ENCODE measurements at regions of chr1 and their contacts with region 1.

Region 1: GRCh38 chr1:201149400-201149799 is 4.9 kb downstream of the TMEM9 start:
- DNase-seq: peak; percentile 69
- H3K4me3 ChIP-seq: no peak overlapping the region
- H3K27ac ChIP-seq: no peak overlapping the region
- H3K4me1 ChIP-seq: peaks cover 10 to 11% of the 10 kb centered on the region in 2 experiments; a peak in 3 of 4 replicates
- H3K27me3 ChIP-seq: no peaks in the 10 kb centered on the region
- CTCF ChIP-seq: peak; percentile 60
- EP300 ChIP-seq: no peak
- RAD21 ChIP-seq: peak; percentile 56

Region 2: GRCh38 chr1:201137579-201138310 is 11.7 kb before region 1 on chr1:
- CTCF ChIA-PET with region 1: interaction called, 13 read pairs
- POLR2A ChIA-PET with region 1: interaction called, 4 read pairs
- DNase-seq: no peak
- H3K4me3 ChIP-seq: no peak overlapping the region; a peak in 1 of 4 replicates
- H3K27ac ChIP-seq: peak overlapping the region in 1 of 2 experiments; percentile 76; a peak in 2 of 4 replicates
- H3K4me1 ChIP-seq: peaks cover 19 to 21% of the 10 kb centered on the region in 2 experiments; a peak in 2 of 4 replicates
- H3K27me3 ChIP-seq: no peaks in the 10 kb centered on the region
- CTCF ChIP-seq: no peak
- EP300 ChIP-seq: no peak
- RAD21 ChIP-seq: no peak

Region 3: GRCh38 chr1:201170533-201171062 is 21.2 kb after region 1 on chr1:
- CTCF ChIA-PET with region 1: interaction called, 15 read pairs
- POLR2A ChIA-PET with region 1: interaction called, 3 read pairs
- DNase-seq: peak; percentile 97
- H3K4me3 ChIP-seq: peak overlapping the region; percentile 70 to 79
- H3K27ac ChIP-seq: peak overlapping the region in 1 of 2 experiments; percentile 76; a peak in 2 of 4 replicates
- H3K4me1 ChIP-seq: peaks cover 0 to 10% of the 10 kb centered on the region in 2 experiments; a peak in 2 of 4 replicates
- H3K27me3 ChIP-seq: 0 out of 2 replicates have a peak, but pooled peaks cover 7% of the 10 kb centered on the region
- CTCF ChIP-seq: no peak
- EP300 ChIP-seq: no peak
- RAD21 ChIP-seq: no peak

Region 4: DNA sequence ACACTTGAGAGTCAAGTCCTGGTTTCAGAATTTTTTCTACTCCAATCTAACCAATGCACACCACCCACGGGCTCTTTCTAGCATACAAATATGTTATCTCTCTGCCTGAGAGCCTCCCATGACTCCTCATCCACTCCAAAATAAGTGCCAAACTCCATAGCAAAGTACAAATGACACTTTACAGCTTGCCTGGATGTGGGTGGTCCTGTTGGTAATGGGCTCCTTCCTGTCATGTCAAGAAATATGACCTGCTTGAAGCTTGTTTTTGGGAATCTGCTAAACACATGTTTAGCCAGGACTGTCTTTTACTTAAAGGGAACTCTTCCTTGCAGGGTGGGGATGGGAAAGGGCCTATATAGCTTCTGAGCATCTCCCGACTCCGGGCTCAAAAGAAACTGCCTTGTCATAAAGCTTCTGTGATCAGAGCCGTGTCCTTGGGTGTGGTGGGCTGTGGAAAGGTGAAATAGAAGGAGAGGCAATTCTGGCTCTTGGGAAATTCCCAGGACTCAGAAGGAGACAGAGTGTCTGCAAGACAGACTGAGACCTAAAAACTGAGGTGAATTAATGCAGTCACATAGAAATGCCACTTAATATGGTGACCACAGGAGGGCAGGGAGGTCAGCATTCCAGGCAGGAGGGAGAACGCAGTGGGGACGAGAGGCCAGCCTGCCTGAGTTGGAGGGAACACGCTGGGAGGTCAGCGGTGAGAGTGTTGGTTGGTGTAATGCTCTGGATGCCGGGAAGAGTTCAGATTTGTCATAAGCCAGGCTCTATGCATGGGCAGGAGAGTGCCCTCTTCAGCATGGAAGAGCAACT is 35.1 kb after region 1 on chr1:
- CTCF ChIA-PET with region 1: interaction called, 26 read pairs
- POLR2A ChIA-PET with region 1: no interaction called
- DNase-seq: peak; percentile 77
- H3K4me3 ChIP-seq: no peak overlapping the region
- H3K27ac ChIP-seq: peak overlapping the region; percentile 2 to 19; a peak in 3 of 4 replicates
- H3K4me1 ChIP-seq: peaks cover 10 to 16% of the 10 kb centered on the region in 2 experiments; a peak in 3 of 4 replicates
- H3K27me3 ChIP-seq: no peaks in the 10 kb centered on the region
- CTCF ChIP-seq: peak; percentile 73
- EP300 ChIP-seq: no peak
- RAD21 ChIP-seq: peak; percentile 69

Measured in SK-N-SH (cell line).